Endothelial cell of umbilical vein (primary cell): ENCODE measurements at regions of chr7 and their contacts with region 1.

Region 1: GRCh38 chr7:102404005-102404861 is 8.1 kb downstream of the PRKRIP1 start:
- DNase-seq: peak; percentile 50
- H3K4me3 ChIP-seq: no peak overlapping the region
- H3K27ac ChIP-seq: no peak overlapping the region
- H3K4me1 ChIP-seq: no peaks in the 10 kb centered on the region
- H3K27me3 ChIP-seq: no peaks in the 10 kb centered on the region
- CTCF ChIP-seq: peak; percentile 39 to 66
- POLR2A ChIP-seq: no peak

Region 2: GRCh38 chr7:101941481-101942383 is 462.5 kb before region 1 on chr7:
- CTCF ChIA-PET with region 1: no interaction called
- POLR2A ChIA-PET with region 1: no interaction called
- dilution Hi-C with region 1: no loop called
- intact Hi-C with region 1: no loop called
- DNase-seq: peak; percentile 64
- H3K4me3 ChIP-seq: no peak overlapping the region
- H3K27ac ChIP-seq: no peak overlapping the region
- H3K4me1 ChIP-seq: peaks cover 6% of the 10 kb centered on the region
- H3K27me3 ChIP-seq: no peaks in the 10 kb centered on the region
- CTCF ChIP-seq: no peak
- POLR2A ChIP-seq: no peak

Region 3: GRCh38 chr7:102425639-102426267 is 21.5 kb after region 1 on chr7:
- CTCF ChIA-PET with region 1: no interaction called
- POLR2A ChIA-PET with region 1: no interaction called
- dilution Hi-C with region 1: no loop called
- intact Hi-C with region 1: loop called (anchors 2 kb)
- DNase-seq: no peak
- H3K4me3 ChIP-seq: no peak overlapping the region
- H3K27ac ChIP-seq: no peak overlapping the region
- H3K4me1 ChIP-seq: no peaks in the 10 kb centered on the region
- H3K27me3 ChIP-seq: no peaks in the 10 kb centered on the region
- CTCF ChIP-seq: no peak
- POLR2A ChIP-seq: no peak

Region 4: GRCh38 chr7:102440078-102440795 is 36.0 kb after region 1 on chr7:
- CTCF ChIA-PET with region 1: interaction called, 13 read pairs
- POLR2A ChIA-PET with region 1: no interaction called
- dilution Hi-C with region 1: no loop called
- intact Hi-C with region 1: no loop called
- DNase-seq: peak; percentile 93
- H3K4me3 ChIP-seq: no peak overlapping the region
- H3K27ac ChIP-seq: peak overlapping the region; percentile 70
- H3K4me1 ChIP-seq: peaks cover 13% of the 10 kb centered on the region
- H3K27me3 ChIP-seq: no peaks in the 10 kb centered on the region
- CTCF ChIP-seq: no peak
- POLR2A ChIP-seq: no peak

Region 5: GRCh38 chr7:102450242-102450641 is 46.0 kb after region 1 on chr7:
- CTCF ChIA-PET with region 1: interaction called, 12 read pairs
- POLR2A ChIA-PET with region 1: no interaction called
- dilution Hi-C with region 1: no loop called
- intact Hi-C with region 1: loop called (anchors 2 kb)
- DNase-seq: no peak
- H3K4me3 ChIP-seq: no peak overlapping the region
- H3K27ac ChIP-seq: no peak overlapping the region
- H3K4me1 ChIP-seq: no peaks in the 10 kb centered on the region
- H3K27me3 ChIP-seq: no peaks in the 10 kb centered on the region
- CTCF ChIP-seq: peak in 1 of 2 donors; percentile 22
- POLR2A ChIP-seq: no peak

Region 6: GRCh38 chr7:102464577-102465280 is 60.5 kb after region 1 on chr7 and contains the starts of genes ALKBH4 and LRWD1:
- CTCF ChIA-PET with region 1: interaction called, 10 read pairs
- POLR2A ChIA-PET with region 1: no interaction called
- dilution Hi-C with region 1: no loop called
- intact Hi-C with region 1: no loop called
- DNase-seq: peak; percentile 91
- H3K4me3 ChIP-seq: peak within 1 kb of the TSS; percentile 63 to 81 (median 70)
- H3K27ac ChIP-seq: peak within 1 kb of the TSS; percentile 28
- H3K4me1 ChIP-seq: peaks cover 9% of the 10 kb centered on the region
- H3K27me3 ChIP-seq: no peaks in the 10 kb centered on the region
- CTCF ChIP-seq: no peak
- POLR2A ChIP-seq: peak; percentile 71
- total RNA-seq, gene ALKBH4: 9.9 and 10.8 TPM in 2 replicates
- total RNA-seq, gene LRWD1: 22.7 and 25.3 TPM in 2 replicates